H1 (cell line): ENCODE measurements at regions of chr11 and their contacts with region 1.

Region 1: GRCh38 chr11:128630367-128631230 is 43.2 kb upstream of the ETS1 start:
- DNase-seq: peak; percentile 50 to 89
- H3K4me3 ChIP-seq: no peak overlapping the region
- H3K27ac ChIP-seq: no peak overlapping the region
- H3K4me1 ChIP-seq: peaks cover 0 to 2% (median 1%) of the 10 kb centered on the region in 4 experiments; a peak in 1 of 7 replicates
- H3K27me3 ChIP-seq: no peaks in the 10 kb centered on the region
- CTCF ChIP-seq: peak; percentile 62 to 88 (median 84)
- EP300 ChIP-seq: no peak
- POLR2A ChIP-seq: no peak
- RAD21 ChIP-seq: peak; percentile 94 to 97

Region 2: GRCh38 chr11:128172046-128172878 is 458.3 kb before region 1 on chr11:
- CTCF ChIA-PET with region 1: interaction called, 94 read pairs
- POLR2A ChIA-PET with region 1: no interaction called
- DNase-seq: peak in 1 of 2 experiments; percentile 85
- H3K4me3 ChIP-seq: no peak overlapping the region
- H3K27ac ChIP-seq: no peak overlapping the region
- H3K4me1 ChIP-seq: peaks cover 2 to 6% (median 3%) of the 10 kb centered on the region in 4 experiments; a peak in 6 of 7 replicates
- H3K27me3 ChIP-seq: no peaks in the 10 kb centered on the region; a peak in 1 of 7 replicates
- CTCF ChIP-seq: peak; percentile 53 to 82 (median 70)
- EP300 ChIP-seq: no peak
- POLR2A ChIP-seq: no peak
- RAD21 ChIP-seq: peak; percentile 90 to 93

Region 3: GRCh38 chr11:128336203-128336602 is 294.4 kb before region 1 on chr11:
- CTCF ChIA-PET with region 1: interaction called, 15 read pairs
- POLR2A ChIA-PET with region 1: no interaction called
- DNase-seq: no peak
- H3K4me3 ChIP-seq: no peak overlapping the region
- H3K27ac ChIP-seq: no peak overlapping the region
- H3K4me1 ChIP-seq: peaks cover 0 to 4% (median 0%) of the 10 kb centered on the region in 4 experiments; a peak in 3 of 7 replicates
- H3K27me3 ChIP-seq: no peaks in the 10 kb centered on the region
- CTCF ChIP-seq: no peak
- EP300 ChIP-seq: no peak
- POLR2A ChIP-seq: no peak
- RAD21 ChIP-seq: no peak

Region 4: DNA sequence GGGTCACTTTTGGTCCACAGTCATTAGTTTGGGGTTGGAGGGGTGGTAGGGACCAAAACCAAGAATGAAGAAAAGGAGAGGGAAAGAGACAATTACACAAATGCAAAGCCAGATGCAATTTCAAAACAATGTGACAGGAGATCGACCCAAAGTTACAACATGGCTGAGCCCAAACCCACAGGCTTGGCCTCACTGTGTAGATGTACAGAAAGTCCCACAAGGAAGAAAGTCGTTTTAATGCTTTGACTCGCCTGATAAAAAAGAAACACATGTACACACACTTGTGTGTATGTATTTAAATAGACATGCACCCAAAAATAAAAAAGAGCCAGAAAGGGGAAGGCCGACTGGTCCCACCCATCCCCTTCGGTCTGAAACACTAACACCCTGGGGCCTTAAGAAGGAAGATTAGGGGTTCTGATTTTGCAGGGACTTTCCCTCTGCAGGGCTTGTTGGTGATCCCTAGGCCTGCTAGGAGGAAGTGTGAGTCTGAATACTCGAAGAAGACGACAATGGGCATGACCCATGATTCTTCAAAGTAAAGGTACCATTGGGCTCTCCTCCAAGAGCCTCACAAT is 147.3 kb before region 1 on chr11:
- CTCF ChIA-PET with region 1: interaction called, 31 read pairs
- POLR2A ChIA-PET with region 1: no interaction called
- DNase-seq: no peak
- H3K4me3 ChIP-seq: no peak overlapping the region
- H3K27ac ChIP-seq: no peak overlapping the region
- H3K4me1 ChIP-seq: no peaks in the 10 kb centered on the region
- H3K27me3 ChIP-seq: no peaks in the 10 kb centered on the region
- CTCF ChIP-seq: no peak
- EP300 ChIP-seq: no peak
- POLR2A ChIP-seq: no peak
- RAD21 ChIP-seq: no peak

Region 5: DNA sequence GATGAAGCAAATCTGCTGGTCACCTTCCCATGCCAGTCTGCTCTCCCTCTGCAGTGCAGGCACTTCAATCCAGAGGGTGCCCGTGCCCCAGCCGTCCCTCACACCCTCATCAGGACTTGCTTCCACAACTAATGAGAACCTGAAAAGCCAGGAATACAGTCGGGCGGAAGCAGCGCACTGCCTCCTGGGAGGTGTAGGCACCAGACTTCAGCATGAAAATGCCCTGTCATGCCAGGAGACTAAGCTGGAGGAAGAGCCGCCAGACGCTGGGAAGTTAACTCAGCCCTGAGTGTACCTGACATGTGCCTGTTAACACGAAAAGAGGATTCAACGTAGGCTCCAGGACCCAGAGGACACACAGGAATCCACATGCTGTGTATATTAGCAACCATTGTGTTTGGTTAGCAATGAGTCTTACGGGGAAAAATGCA is 23.2 kb after region 1 on chr11:
- CTCF ChIA-PET with region 1: interaction called, 43 read pairs
- POLR2A ChIA-PET with region 1: no interaction called
- DNase-seq: peak in 1 of 2 experiments; percentile 57
- H3K4me3 ChIP-seq: no peak overlapping the region
- H3K27ac ChIP-seq: no peak overlapping the region
- H3K4me1 ChIP-seq: peaks cover 0 to 5% (median 1%) of the 10 kb centered on the region in 4 experiments; a peak in 3 of 7 replicates
- H3K27me3 ChIP-seq: no peaks in the 10 kb centered on the region
- CTCF ChIP-seq: peak; percentile 7 to 28 (median 24); a peak in 3 of 4 replicates
- EP300 ChIP-seq: no peak
- POLR2A ChIP-seq: no peak
- RAD21 ChIP-seq: peak; percentile 42 to 44; a peak in 3 of 4 replicates

Region 6: GRCh38 chr11:128802358-128802981 is 171.9 kb after region 1 on chr11:
- CTCF ChIA-PET with region 1: interaction called, 10 read pairs
- POLR2A ChIA-PET with region 1: no interaction called
- DNase-seq: peak in 1 of 2 experiments; percentile 67
- H3K4me3 ChIP-seq: no peak overlapping the region
- H3K27ac ChIP-seq: no peak overlapping the region
- H3K4me1 ChIP-seq: no peaks in the 10 kb centered on the region
- H3K27me3 ChIP-seq: no peaks in the 10 kb centered on the region
- CTCF ChIP-seq: peak; percentile 57 to 83 (median 77)
- EP300 ChIP-seq: no peak
- POLR2A ChIP-seq: no peak
- RAD21 ChIP-seq: peak; percentile 59 to 78